MCF 10A (cell line): ENCODE measurements at regions of chr1 and their contacts with region 1.

Region 1: GRCh38 chr1:245156081-245156735 is 1.4 kb downstream of the KIF26B start:
- DNase-seq: peak; percentile 93
- H3K4me3 Mint-ChIP-seq: peak overlapping the region; percentile 79
- H3K27ac Mint-ChIP-seq: no peak overlapping the region
- H3K4me1 Mint-ChIP-seq: peaks cover 17% of the 10 kb centered on the region
- H3K27me3 Mint-ChIP-seq: peaks cover 38% of the 10 kb centered on the region
- CTCF ChIP-seq: peak; percentile 99

Region 2: DNA sequence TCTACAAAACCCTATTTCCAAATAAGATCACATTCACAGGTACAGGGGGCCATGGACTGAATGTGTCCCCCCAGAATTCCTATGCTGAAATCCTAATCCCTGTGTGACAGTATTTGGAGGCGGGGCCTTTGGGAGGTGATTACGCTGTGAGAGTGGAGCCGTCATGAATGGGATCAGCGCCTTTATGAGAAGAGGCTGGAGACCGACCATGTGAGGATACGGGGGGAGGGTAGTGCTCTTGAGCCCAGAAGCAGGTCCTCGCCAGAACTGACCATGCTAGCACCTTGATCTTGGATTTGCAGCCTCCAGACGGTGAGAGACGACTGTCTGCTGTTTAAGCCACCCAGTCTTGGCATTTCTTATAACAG is 25.2 kb before region 1 on chr1:
- CTCF ChIA-PET with region 1: interaction called, 35 read pairs
- POLR2A ChIA-PET with region 1: no interaction called
- intact Hi-C with region 1: no loop called
- DNase-seq: no peak
- H3K4me3 Mint-ChIP-seq: no peak overlapping the region
- H3K27ac Mint-ChIP-seq: no peak overlapping the region
- H3K4me1 Mint-ChIP-seq: peaks cover 14% of the 10 kb centered on the region
- H3K27me3 Mint-ChIP-seq: peaks cover 47% of the 10 kb centered on the region
- CTCF ChIP-seq: no peak

Region 3: DNA sequence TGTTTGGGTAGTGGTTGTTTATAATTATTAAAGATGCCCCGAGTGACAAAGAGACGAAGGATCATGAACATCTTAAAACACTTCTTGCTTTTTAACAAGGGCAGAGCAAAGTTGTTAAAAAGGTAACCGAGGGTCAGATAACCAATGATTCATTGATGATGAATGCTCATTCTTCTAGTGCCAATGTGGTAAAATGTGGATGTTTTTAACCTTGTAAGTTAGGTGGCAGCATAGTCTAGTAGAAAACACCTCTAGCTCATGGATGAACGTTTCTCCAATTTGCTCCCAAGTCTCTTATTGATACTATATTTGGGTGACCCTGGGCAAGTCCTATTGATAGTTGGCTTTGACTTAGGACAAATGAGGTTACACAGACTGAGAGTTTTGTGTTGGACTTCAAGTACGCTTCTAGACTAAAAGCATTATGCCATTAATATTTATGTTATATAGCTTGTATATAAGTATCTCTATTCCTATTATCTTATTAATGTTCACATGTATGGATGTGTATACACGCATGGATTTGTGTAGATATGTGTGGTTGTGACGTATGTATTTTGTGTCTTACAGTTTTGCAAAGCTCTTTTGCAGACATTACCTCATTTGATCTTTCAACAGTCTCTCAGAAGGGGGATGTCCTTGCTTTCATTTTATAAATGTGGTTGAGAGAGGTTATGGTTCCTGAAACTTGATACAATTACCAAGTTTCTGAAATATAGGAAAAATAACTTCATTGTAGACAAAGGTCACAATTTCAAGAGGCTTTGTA is 166.6 kb after region 1 on chr1:
- CTCF ChIA-PET with region 1: interaction called, 18 read pairs
- POLR2A ChIA-PET with region 1: interaction called, 4 read pairs
- intact Hi-C with region 1: loop called (anchors 5 kb)
- DNase-seq: peak; percentile 55
- H3K4me3 Mint-ChIP-seq: no peak overlapping the region
- H3K27ac Mint-ChIP-seq: no peak overlapping the region
- H3K4me1 Mint-ChIP-seq: no peaks in the 10 kb centered on the region
- H3K27me3 Mint-ChIP-seq: peaks cover 18% of the 10 kb centered on the region
- CTCF ChIP-seq: peak; percentile 46

Region 4: GRCh38 chr1:245418077-245418476 is 261.9 kb after region 1 on chr1:
- CTCF ChIA-PET with region 1: no interaction called
- POLR2A ChIA-PET with region 1: no interaction called
- intact Hi-C with region 1: no loop called
- DNase-seq: no peak
- H3K4me3 Mint-ChIP-seq: no peak overlapping the region
- H3K27ac Mint-ChIP-seq: no peak overlapping the region
- H3K4me1 Mint-ChIP-seq: no peaks in the 10 kb centered on the region
- H3K27me3 Mint-ChIP-seq: peaks cover 65% of the 10 kb centered on the region
- CTCF ChIP-seq: no peak

Region 5: DNA sequence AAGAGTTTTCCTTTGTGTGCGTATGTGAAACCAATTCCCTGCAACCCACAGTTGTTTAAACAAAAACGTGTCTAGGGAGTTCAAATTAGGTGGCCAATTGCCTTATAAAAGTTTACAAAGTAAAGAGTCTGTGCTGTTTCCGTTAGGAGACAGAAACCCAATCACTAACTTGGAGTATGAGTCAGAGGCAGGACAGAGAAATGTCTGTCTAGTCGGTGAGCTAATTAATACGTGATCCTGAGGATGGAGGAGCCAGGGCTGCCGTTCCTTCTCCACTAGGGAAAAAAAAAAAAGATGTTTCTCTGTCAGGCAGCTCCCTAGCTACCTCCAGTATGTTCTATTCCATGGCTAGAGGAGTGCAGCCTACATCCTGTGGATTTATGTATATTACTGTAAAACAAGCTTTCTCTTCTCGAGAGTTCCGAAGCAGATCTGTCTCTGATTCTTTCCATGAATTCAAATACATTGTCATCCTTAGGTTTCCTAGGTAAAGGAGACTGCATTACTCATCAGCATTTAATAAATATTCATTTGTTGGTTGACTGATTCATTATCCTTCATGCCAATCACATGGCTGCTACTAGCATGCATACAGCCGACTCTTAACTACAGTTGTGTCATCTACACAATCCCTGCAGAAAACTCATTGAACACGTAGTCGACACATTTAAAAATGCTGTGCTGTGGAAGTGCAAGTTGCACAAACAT is 429.2 kb after region 1 on chr1:
- CTCF ChIA-PET with region 1: interaction called, 4 read pairs
- POLR2A ChIA-PET with region 1: interaction called, 3 read pairs
- intact Hi-C with region 1: loop called (anchors 10 kb)
- DNase-seq: peak; percentile 67
- H3K4me3 Mint-ChIP-seq: no peak overlapping the region
- H3K27ac Mint-ChIP-seq: no peak overlapping the region
- H3K4me1 Mint-ChIP-seq: peaks cover 7% of the 10 kb centered on the region
- H3K27me3 Mint-ChIP-seq: peaks cover 31% of the 10 kb centered on the region
- CTCF ChIP-seq: no peak

Region 6: DNA sequence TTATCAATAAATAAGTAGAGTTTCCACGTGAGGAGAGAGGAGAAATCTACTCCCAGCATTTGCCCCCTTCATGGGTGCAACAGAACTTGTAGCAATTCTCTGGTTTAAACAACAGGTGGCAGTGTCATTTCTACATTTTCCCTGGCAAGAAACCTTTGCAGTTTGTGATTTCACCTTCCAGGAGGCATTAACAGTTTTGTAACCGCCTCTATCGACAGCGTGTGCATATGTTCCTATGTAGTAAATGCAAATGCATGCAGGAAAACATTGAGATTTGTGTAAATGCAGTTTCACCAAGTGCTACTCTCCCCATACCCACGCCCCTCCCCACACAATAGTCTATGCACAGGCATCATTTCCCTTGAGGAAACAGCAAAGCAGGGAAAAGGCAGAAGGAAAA is 856.1 kb after region 1 on chr1:
- CTCF ChIA-PET with region 1: interaction called, 131 read pairs
- POLR2A ChIA-PET with region 1: no interaction called
- intact Hi-C with region 1: no loop called
- DNase-seq: peak; percentile 71
- H3K4me3 Mint-ChIP-seq: no peak overlapping the region
- H3K27ac Mint-ChIP-seq: no peak overlapping the region
- H3K4me1 Mint-ChIP-seq: no peaks in the 10 kb centered on the region
- H3K27me3 Mint-ChIP-seq: no peaks in the 10 kb centered on the region
- CTCF ChIP-seq: peak; percentile 81

Region 7: DNA sequence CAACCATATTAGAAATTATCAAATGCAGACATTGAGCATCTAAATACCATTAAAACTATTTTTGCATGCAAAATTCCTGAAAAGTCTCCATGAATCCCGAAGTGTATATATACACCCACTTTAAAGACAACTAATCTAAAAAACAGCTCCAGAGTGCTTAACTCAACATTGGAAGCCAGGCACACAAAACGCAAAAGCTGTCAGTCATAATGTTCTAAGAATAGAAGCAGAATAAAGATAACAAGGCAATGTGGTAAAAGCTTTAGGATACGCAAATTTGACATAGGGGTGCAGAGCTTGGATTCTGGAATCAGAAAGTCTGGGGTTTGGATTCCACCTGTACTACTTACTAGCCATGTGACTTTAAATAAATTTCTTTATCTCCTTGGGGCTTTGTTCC is 1288.4 kb after region 1 on chr1:
- CTCF ChIA-PET with region 1: interaction called, 44 read pairs
- POLR2A ChIA-PET with region 1: no interaction called
- intact Hi-C with region 1: no loop called
- DNase-seq: no peak
- H3K4me3 Mint-ChIP-seq: no peak overlapping the region
- H3K27ac Mint-ChIP-seq: no peak overlapping the region
- H3K4me1 Mint-ChIP-seq: no peaks in the 10 kb centered on the region
- H3K27me3 Mint-ChIP-seq: no peaks in the 10 kb centered on the region
- CTCF ChIP-seq: no peak

Region 8: DNA sequence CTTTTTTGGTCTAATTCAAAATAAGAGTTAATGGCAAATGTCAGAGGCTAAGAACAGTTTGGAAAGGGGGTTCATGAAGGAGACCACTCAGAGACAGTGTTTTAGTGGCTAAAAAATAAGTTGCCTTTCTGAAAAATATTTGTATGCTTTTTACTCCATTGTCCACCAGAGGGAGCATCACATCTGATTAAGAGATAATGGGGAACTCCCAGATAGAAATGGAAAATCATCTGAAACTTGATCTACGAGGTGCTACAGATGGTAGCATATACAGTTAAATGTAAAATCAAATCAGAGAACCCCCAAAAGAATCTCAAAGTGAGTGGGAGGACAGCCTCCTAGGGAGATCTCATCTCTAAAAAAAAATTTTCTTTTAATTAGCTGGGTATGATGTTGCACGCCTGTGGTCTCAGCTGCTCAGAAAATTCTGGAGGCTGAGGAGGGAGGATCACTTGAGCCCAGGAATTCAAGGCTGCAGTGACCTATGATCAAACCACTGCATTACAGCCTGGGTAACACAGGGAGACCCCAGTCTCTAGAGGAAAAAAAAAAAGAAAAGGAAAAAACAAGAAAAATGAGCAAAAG is 1341.2 kb after region 1 on chr1:
- CTCF ChIA-PET with region 1: interaction called, 91 read pairs
- POLR2A ChIA-PET with region 1: no interaction called
- intact Hi-C with region 1: loop called (anchors 1 kb)
- DNase-seq: peak; percentile 91
- H3K4me3 Mint-ChIP-seq: no peak overlapping the region
- H3K27ac Mint-ChIP-seq: no peak overlapping the region
- H3K4me1 Mint-ChIP-seq: peaks cover 7% of the 10 kb centered on the region
- H3K27me3 Mint-ChIP-seq: no peaks in the 10 kb centered on the region
- CTCF ChIP-seq: peak; percentile 86